CD8-positive, alpha-beta T cell (primary cell): ENCODE measurements at regions of chr19 and their contacts with region 1.

Region 1: GRCh38 chr19:57389730-57390598 is at the start of gene ZNF548:
- DNase-seq: peak; percentile 93 to 100 (median 98)
- ATAC-seq: peak; percentile 95
- H3K4me3 ChIP-seq: peak within 1 kb of the TSS; percentile 79 to 93
- H3K4me3 Mint-ChIP-seq: peak within 1 kb of the TSS; percentile 95
- H3K27ac ChIP-seq: peak within 1 kb of the TSS; percentile 92 to 98
- H3K27ac Mint-ChIP-seq: peak within 1 kb of the TSS; percentile 97
- H3K4me1 ChIP-seq: peaks cover 19% of the 10 kb centered on the region
- H3K4me1 Mint-ChIP-seq: peaks cover 43% of the 10 kb centered on the region
- H3K27me3 ChIP-seq: no peaks in the 10 kb centered on the region
- H3K27me3 Mint-ChIP-seq: no peaks in the 10 kb centered on the region
- CTCF ChIP-seq: no peak
- total RNA-seq, gene ZNF548: 75.4 to 79.1 TPM

Region 2: GRCh38 chr19:57320180-57321084 is 69.5 kb before region 1 on chr19 and contains the start of gene ZNF543:
- CTCF ChIA-PET with region 1: no interaction called
- POLR2A ChIA-PET with region 1: no interaction called
- intact Hi-C with region 1: loop called in 1 of 2 experiments (anchors 1 kb)
- DNase-seq: peak; percentile 85 to 96 (median 91)
- ATAC-seq: peak; percentile 95
- H3K4me3 ChIP-seq: peak within 1 kb of the TSS; percentile 61 to 94
- H3K4me3 Mint-ChIP-seq: peak within 1 kb of the TSS; percentile 92
- H3K27ac ChIP-seq: peak within 1 kb of the TSS; percentile 78 to 94
- H3K27ac Mint-ChIP-seq: peak within 1 kb of the TSS; percentile 96
- H3K4me1 ChIP-seq: peaks cover 21% of the 10 kb centered on the region
- H3K4me1 Mint-ChIP-seq: peaks cover 32% of the 10 kb centered on the region
- H3K27me3 ChIP-seq: peaks cover 6 to 7% of the 10 kb centered on the region in 2 experiments
- H3K27me3 Mint-ChIP-seq: peaks cover 22% of the 10 kb centered on the region
- CTCF ChIP-seq: no peak
- total RNA-seq, gene ZNF543: 4.3 to 4.9 TPM

Region 3: DNA sequence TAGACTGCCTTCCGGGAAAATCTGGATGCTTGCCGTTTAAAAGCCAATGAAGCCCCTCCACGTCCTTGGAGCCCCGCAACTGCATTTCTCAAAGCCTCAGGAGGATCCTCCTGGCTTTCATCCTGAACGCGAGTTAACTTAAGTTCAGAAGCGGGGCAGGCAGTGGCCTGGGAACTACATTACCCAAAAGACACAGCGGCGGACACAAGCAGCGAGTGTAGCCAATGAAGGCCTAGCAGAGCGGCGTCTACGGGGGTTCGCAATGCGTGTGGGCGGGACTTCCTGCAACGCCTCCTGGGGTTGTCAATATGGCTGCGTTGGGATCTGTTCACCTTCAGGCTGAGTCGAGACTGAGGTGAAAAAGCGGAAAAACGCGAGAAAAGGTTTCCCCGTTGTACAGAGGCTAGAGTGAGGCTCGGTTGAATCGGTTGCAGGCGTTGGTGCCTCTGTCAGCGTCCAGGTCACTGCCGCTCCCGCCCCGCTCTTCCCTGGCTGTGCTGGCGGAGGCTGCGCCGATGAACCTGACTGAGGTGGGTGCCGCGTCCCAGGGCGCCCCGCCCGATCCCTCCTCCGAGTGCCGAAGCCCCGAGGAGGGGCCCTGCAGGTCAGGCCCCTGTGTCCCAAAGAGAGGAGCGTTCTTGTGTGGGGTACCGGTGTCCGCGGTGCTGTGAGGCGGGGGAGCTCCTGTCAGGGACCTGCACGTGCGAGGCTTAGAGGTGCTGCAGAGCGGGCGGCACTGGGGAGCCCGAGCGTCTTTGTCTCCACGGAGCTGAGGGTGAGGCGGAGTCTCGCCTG is 21.1 kb after region 1 on chr19 and contains the start of gene ZNF17:
- CTCF ChIA-PET with region 1: interaction called, 5 read pairs
- POLR2A ChIA-PET with region 1: interaction called, 5 read pairs
- intact Hi-C with region 1: loop called (anchors 1 kb)
- DNase-seq: peak; percentile 83 to 96 (median 91)
- ATAC-seq: peak; percentile 100
- H3K4me3 ChIP-seq: peak within 1 kb of the TSS; percentile 82 to 99
- H3K4me3 Mint-ChIP-seq: peak within 1 kb of the TSS; percentile 96
- H3K27ac ChIP-seq: peak within 1 kb of the TSS; percentile 67 to 83
- H3K27ac Mint-ChIP-seq: peak within 1 kb of the TSS; percentile 94
- H3K4me1 ChIP-seq: peaks cover 13% of the 10 kb centered on the region
- H3K4me1 Mint-ChIP-seq: peaks cover 35% of the 10 kb centered on the region
- H3K27me3 ChIP-seq: no peaks in the 10 kb centered on the region
- H3K27me3 Mint-ChIP-seq: no peaks in the 10 kb centered on the region
- CTCF ChIP-seq: no peak
- total RNA-seq, gene ZNF17: 15.5 to 18.3 TPM

Region 4: GRCh38 chr19:57527136-57527881 is 137.3 kb after region 1 on chr19 and contains the start of gene ZNF549:
- CTCF ChIA-PET with region 1: no interaction called
- POLR2A ChIA-PET with region 1: no interaction called
- intact Hi-C with region 1: loop called (anchors 1 kb)
- DNase-seq: peak; percentile 77 to 95 (median 89)
- ATAC-seq: peak; percentile 98
- H3K4me3 ChIP-seq: peak within 1 kb of the TSS; percentile 97
- H3K4me3 Mint-ChIP-seq: peak within 1 kb of the TSS; percentile 94
- H3K27ac ChIP-seq: peak within 1 kb of the TSS; percentile 80 to 88
- H3K27ac Mint-ChIP-seq: peak within 1 kb of the TSS; percentile 96
- H3K4me1 ChIP-seq: peaks cover 16% of the 10 kb centered on the region
- H3K4me1 Mint-ChIP-seq: peaks cover 32% of the 10 kb centered on the region
- H3K27me3 ChIP-seq: no peaks in the 10 kb centered on the region
- H3K27me3 Mint-ChIP-seq: no peaks in the 10 kb centered on the region
- CTCF ChIP-seq: no peak
- total RNA-seq, gene ZNF549: 14.6 to 17.1 TPM

Region 5: DNA sequence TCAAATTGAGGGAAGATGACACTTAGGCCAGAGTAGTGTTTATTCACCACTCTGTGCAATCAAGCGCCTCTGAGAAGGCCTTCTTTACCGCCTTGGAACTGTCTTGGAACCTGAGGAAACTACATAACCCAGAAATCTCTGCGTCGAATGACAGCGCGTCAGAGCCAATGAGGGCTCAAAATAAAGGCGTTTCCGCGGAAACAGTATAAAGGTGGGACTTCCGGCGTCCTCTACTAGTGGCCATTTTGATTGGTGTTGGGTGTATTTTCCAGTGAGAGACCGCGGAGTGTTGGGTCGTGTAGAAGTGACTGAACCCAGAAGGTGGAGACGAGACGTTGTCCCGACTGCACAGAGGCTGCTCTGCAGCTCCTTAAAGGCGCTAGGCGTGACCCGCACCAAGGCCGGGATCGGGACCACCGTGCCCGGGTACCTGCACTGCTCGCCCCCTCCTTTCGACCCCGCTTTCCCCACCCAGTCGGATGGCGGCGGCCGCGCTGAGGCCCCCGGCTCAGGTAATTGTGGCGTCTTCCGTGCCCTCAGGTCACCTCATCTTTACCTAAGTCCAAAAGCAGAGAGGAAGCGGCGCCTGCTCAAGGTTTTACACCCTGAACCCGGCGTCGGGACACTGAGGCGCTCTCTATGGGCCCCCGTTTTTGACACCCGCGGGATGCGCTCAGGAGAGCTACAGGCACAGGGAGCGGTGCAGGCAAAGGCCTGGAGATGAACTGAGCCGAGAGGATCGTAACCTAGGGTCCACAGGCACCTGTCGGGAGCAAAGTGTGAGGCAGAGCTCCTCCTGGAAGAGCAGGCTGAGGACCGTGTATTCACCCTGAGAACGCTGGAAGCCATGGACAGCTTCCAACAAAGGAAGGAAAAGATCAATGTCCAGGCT is 356.9 kb after region 1 on chr19 and contains the start of gene ZNF776:
- CTCF ChIA-PET with region 1: no interaction called
- POLR2A ChIA-PET with region 1: no interaction called
- intact Hi-C with region 1: loop called in 1 of 2 experiments (anchors 1 kb)
- DNase-seq: peak; percentile 63 to 93 (median 84)
- ATAC-seq: peak; percentile 96
- H3K4me3 ChIP-seq: peak within 1 kb of the TSS; percentile 75 to 84
- H3K4me3 Mint-ChIP-seq: peak within 1 kb of the TSS; percentile 95
- H3K27ac ChIP-seq: peak within 1 kb of the TSS; percentile 71 to 80
- H3K27ac Mint-ChIP-seq: peak within 1 kb of the TSS; percentile 98
- H3K4me1 ChIP-seq: peaks cover 16% of the 10 kb centered on the region
- H3K4me1 Mint-ChIP-seq: peaks cover 41% of the 10 kb centered on the region
- H3K27me3 ChIP-seq: no peaks in the 10 kb centered on the region
- H3K27me3 Mint-ChIP-seq: no peaks in the 10 kb centered on the region
- CTCF ChIP-seq: no peak
- total RNA-seq, gene ZNF776: 22.3 to 32.3 TPM

Region 6: GRCh38 chr19:58182989-58183816 is 793.2 kb after region 1 on chr19 and contains the start of gene ZNF274:
- CTCF ChIA-PET with region 1: no interaction called
- POLR2A ChIA-PET with region 1: interaction called, 3 read pairs
- intact Hi-C with region 1: loop called in 1 of 2 experiments (anchors 1 kb)
- DNase-seq: peak; percentile 88 to 96 (median 94)
- ATAC-seq: peak; percentile 86
- H3K4me3 ChIP-seq: peak within 1 kb of the TSS; percentile 90 to 94
- H3K4me3 Mint-ChIP-seq: peak within 1 kb of the TSS; percentile 91
- H3K27ac ChIP-seq: peak within 1 kb of the TSS; percentile 99 to 100
- H3K27ac Mint-ChIP-seq: peak within 1 kb of the TSS; percentile 100
- H3K4me1 ChIP-seq: peaks cover 9% of the 10 kb centered on the region
- H3K4me1 Mint-ChIP-seq: peaks cover 22% of the 10 kb centered on the region
- H3K27me3 ChIP-seq: no peaks in the 10 kb centered on the region
- H3K27me3 Mint-ChIP-seq: no peaks in the 10 kb centered on the region
- CTCF ChIP-seq: no peak
- total RNA-seq, gene ZNF274: 52.7 to 58.9 TPM